HepG2 (cell line): ENCODE measurements at regions of chr6 and their contacts with region 1.

Region 1: DNA sequence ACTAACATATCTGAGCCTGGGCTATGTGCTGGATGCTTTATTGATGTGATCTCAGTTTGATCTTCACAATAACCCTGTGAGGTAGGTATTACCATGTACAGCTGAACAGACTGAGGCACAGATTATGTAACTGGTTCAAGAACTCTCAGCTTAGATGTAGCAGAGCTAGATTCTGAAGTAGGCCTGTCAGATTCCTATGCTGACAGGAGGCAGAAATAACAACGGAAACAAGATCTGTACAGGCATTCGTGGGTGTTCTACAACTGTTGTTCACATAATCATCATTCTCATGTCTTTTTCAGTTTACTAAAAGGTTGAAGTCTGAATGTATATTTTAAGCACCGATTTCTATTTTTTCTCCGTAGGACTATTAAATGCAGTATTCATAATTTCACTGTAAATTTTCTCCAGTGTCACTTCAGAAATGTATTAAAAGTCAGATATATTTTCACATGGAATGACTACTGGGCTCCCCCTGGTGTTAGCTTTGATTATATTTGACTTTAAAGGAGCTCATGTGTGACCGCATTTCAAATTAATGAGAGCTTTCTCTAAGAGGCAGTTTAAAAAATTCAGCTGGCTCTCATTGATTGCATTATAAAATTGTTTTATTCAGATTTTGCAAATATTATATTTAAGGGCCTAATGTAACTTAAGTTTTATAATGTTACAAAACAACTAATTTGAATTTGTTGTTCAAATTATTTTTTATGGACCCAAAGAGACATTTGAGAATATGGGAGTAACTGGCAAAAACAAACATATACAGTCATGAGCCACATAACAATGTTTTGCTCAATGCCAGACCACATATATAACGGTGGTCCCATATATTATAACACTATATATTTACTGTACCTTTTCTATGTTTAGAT is 36.4 kb upstream of the SLC17A4 start:
- DNase-seq: peak; percentile 39
- ATAC-seq: no peak
- H3K4me3 ChIP-seq: no peak overlapping the region
- H3K27ac ChIP-seq: no peak overlapping the region
- H3K4me1 ChIP-seq: peaks cover 38% of the 10 kb centered on the region
- H3K27me3 ChIP-seq: no peaks in the 10 kb centered on the region
- CTCF ChIP-seq: peak; percentile 64
- EP300 ChIP-seq: no peak
- POLR2A ChIP-seq: no peak
- RAD21 ChIP-seq: peak; percentile 56; the same call in 1 of the 2 replicates

Region 2: DNA sequence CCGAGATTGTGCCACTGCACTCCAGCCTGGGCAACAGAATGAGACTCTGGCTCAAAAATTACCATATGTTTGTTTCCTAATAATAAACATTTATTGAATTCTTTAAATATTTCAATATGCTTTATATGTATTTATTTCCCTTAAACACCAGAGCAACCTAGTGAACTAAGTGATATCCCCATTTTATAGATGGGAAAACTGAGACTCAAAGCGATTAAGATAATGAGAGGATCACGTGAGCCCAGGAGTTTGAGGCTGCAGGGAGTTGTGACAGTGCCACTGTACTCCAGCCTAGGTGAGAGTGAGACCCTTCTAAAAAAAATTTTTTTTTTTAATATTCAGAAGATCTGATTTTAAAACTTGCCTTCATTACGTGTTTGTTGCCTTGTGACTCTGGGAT is 458.3 kb before region 1 on chr6:
- CTCF ChIA-PET with region 1: no interaction called
- POLR2A ChIA-PET with region 1: no interaction called
- in situ Hi-C with region 1: no loop called
- intact Hi-C with region 1: no loop called
- DNase-seq: no peak
- ATAC-seq: no peak
- H3K4me3 ChIP-seq: no peak overlapping the region
- H3K27ac ChIP-seq: no peak overlapping the region
- H3K4me1 ChIP-seq: no peaks in the 10 kb centered on the region
- H3K27me3 ChIP-seq: no peaks in the 10 kb centered on the region
- CTCF ChIP-seq: no peak
- EP300 ChIP-seq: no peak
- POLR2A ChIP-seq: no peak
- RAD21 ChIP-seq: no peak

Region 3: DNA sequence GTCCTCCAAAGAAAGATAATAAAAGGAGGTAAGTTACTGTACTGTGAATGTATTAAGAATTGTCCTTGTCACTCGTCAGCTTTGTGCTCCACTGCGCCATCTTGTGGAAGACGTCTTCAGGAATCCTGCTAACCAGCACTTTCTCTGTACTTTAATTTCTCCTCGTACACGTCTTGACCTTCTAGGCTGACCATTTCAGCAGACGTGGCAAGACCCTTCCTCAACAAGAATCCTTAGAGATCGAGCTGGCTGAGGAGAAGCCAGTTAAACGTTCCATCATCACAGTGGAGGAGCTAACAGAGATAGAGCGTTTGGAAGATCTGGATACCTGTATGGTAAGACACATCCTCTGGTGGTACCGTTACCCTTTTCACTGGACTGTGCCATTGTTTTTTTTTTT is 161.6 kb before region 1 on chr6:
- CTCF ChIA-PET with region 1: interaction called, 8 read pairs
- POLR2A ChIA-PET with region 1: no interaction called
- in situ Hi-C with region 1: no loop called
- intact Hi-C with region 1: loop called (anchors 2 kb)
- DNase-seq: peak; percentile 65
- ATAC-seq: peak; percentile 81
- H3K4me3 ChIP-seq: no peak overlapping the region
- H3K27ac ChIP-seq: no peak overlapping the region
- H3K4me1 ChIP-seq: no peaks in the 10 kb centered on the region
- H3K27me3 ChIP-seq: no peaks in the 10 kb centered on the region
- CTCF ChIP-seq: peak; percentile 88
- EP300 ChIP-seq: no peak
- POLR2A ChIP-seq: no peak
- RAD21 ChIP-seq: no peak

Region 4: GRCh38 chr6:25637960-25638434 is 80.1 kb before region 1 on chr6:
- CTCF ChIA-PET with region 1: no interaction called
- POLR2A ChIA-PET with region 1: interaction called, 3 read pairs
- in situ Hi-C with region 1: no loop called
- intact Hi-C with region 1: loop called (anchors 5 kb)
- DNase-seq: peak; percentile 38
- ATAC-seq: peak; percentile 6
- H3K4me3 ChIP-seq: no peak overlapping the region
- H3K27ac ChIP-seq: peak overlapping the region; percentile 73
- H3K4me1 ChIP-seq: peaks cover 89% of the 10 kb centered on the region
- H3K27me3 ChIP-seq: no peaks in the 10 kb centered on the region
- CTCF ChIP-seq: peak; percentile 57
- EP300 ChIP-seq: no peak
- POLR2A ChIP-seq: no peak
- RAD21 ChIP-seq: no peak

Region 5: DNA sequence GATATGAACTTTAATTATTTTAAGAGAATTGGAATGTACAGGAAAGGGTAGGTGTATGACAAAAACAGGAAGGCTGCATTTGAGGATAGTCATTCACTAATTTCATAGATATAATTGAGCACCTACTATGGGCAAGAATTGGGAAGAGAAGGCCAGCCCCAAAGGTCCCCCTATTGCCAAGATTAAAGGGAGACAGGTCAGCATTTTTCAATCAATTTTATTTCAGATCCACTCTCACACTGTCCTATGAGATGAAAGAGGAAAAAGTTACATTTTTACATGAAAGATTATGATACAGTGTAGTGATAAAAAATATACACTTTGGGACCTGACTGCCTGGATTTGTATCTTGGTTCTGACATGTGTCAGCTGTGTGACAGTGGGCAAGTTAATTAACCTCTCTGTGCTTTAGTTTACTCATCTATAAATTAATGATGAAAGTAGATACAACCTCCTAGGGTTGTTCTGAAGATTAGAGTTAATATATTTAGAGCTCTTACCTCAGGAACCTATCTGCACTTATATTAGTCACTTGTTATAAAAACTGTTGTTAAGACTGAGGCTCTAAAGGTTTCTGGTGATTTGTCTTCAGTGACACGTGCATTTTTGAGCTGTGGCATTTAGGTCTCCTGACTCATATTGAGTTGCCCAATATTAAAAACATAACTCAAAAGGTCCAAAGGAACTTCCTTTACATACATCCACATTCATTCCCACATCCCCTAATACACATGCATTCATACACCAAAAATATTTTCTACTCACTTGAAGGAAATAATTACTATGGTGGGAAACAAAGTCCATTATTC is 20.4 kb before region 1 on chr6:
- CTCF ChIA-PET with region 1: no interaction called
- POLR2A ChIA-PET with region 1: no interaction called
- in situ Hi-C with region 1: no loop called
- intact Hi-C with region 1: no loop called
- DNase-seq: no peak
- ATAC-seq: no peak
- H3K4me3 ChIP-seq: no peak overlapping the region
- H3K27ac ChIP-seq: no peak overlapping the region
- H3K4me1 ChIP-seq: peaks cover under 1% of the 10 kb centered on the region
- H3K27me3 ChIP-seq: no peaks in the 10 kb centered on the region; a peak in 1 of 5 replicates
- CTCF ChIP-seq: no peak
- EP300 ChIP-seq: no peak
- POLR2A ChIP-seq: no peak
- RAD21 ChIP-seq: no peak

Region 6: GRCh38 chr6:25801436-25801835 is 83.3 kb after region 1 on chr6:
- CTCF ChIA-PET with region 1: no interaction called
- POLR2A ChIA-PET with region 1: no interaction called
- in situ Hi-C with region 1: no loop called
- intact Hi-C with region 1: no loop called
- DNase-seq: no peak
- ATAC-seq: no peak
- H3K4me3 ChIP-seq: no peak overlapping the region
- H3K27ac ChIP-seq: no peak overlapping the region
- H3K4me1 ChIP-seq: no peaks in the 10 kb centered on the region
- H3K27me3 ChIP-seq: no peaks in the 10 kb centered on the region
- CTCF ChIP-seq: no peak
- EP300 ChIP-seq: no peak
- POLR2A ChIP-seq: no peak
- RAD21 ChIP-seq: no peak

Region 7: DNA sequence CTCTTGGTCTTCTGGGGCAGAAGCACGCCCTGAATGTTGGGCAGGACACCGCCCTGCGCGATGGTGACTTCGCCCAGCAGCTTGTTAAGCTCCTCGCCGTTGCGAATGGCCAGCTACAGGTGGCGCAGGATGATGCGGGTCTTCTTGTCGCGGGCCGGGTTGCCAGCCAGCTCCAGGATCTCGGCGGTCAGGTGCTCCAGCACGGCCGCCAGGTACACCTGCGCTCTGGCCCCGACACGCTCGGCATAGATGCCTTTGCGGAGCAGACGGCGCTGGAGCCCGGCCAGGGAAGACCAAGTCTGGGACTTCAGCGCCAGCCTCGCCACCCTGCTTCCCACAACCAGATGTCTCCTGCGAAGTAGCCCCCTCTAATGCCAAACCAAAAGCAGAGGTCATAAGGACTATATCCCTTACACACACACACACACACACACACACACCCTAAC is 164.0 kb after region 1 on chr6:
- CTCF ChIA-PET with region 1: no interaction called
- POLR2A ChIA-PET with region 1: no interaction called
- in situ Hi-C with region 1: loop called (anchors 5 kb)
- intact Hi-C with region 1: no loop called
- DNase-seq: no peak
- ATAC-seq: no peak
- H3K4me3 ChIP-seq: no peak overlapping the region
- H3K27ac ChIP-seq: no peak overlapping the region
- H3K4me1 ChIP-seq: peaks cover 18% of the 10 kb centered on the region
- H3K27me3 ChIP-seq: no peaks in the 10 kb centered on the region
- CTCF ChIP-seq: peak; percentile 27; the same call in 1 of the 2 replicates
- EP300 ChIP-seq: no peak
- POLR2A ChIP-seq: no peak
- RAD21 ChIP-seq: no peak

Region 8: DNA sequence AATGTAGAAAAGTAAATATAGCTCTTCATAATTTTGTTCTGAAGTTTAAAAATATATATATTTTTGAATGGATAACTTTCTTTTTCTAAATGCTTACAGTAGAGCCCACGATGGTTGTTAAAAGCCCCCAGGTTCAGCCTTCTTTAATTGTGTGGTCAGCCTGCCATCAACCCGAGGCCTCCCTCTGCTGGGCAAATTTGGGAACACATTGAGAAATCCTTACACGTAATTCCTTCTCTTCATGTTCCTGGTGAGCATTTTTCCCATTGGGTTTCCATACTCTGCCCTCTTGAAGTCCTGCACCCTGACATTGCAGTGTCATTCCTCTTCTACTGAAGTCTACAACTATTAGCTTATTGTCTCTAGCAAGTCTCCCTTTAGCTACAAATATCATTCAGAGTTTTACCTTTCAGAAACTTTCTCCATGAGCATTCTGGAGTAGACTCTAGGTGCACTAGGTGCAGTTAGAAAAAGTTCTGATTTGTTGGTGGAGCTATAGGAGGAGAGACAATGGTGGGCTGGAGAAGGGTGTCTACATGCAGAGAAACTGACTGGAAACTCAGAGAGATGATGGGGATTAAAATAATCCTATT is 285.1 kb after region 1 on chr6:
- CTCF ChIA-PET with region 1: interaction called, 3 read pairs
- POLR2A ChIA-PET with region 1: no interaction called
- in situ Hi-C with region 1: no loop called
- intact Hi-C with region 1: loop called (anchors 5 kb)
- DNase-seq: peak; percentile 63
- ATAC-seq: peak; percentile 82
- H3K4me3 ChIP-seq: no peak overlapping the region
- H3K27ac ChIP-seq: no peak overlapping the region
- H3K4me1 ChIP-seq: no peaks in the 10 kb centered on the region
- H3K27me3 ChIP-seq: no peaks in the 10 kb centered on the region
- CTCF ChIP-seq: peak; percentile 79
- EP300 ChIP-seq: no peak
- POLR2A ChIP-seq: no peak
- RAD21 ChIP-seq: 0 out of 2 replicates have a peak, but pooled peaks have one; percentile 30